K562 (cell line): ENCODE measurements at regions of chr1 and their contacts with region 1.

Region 1: DNA sequence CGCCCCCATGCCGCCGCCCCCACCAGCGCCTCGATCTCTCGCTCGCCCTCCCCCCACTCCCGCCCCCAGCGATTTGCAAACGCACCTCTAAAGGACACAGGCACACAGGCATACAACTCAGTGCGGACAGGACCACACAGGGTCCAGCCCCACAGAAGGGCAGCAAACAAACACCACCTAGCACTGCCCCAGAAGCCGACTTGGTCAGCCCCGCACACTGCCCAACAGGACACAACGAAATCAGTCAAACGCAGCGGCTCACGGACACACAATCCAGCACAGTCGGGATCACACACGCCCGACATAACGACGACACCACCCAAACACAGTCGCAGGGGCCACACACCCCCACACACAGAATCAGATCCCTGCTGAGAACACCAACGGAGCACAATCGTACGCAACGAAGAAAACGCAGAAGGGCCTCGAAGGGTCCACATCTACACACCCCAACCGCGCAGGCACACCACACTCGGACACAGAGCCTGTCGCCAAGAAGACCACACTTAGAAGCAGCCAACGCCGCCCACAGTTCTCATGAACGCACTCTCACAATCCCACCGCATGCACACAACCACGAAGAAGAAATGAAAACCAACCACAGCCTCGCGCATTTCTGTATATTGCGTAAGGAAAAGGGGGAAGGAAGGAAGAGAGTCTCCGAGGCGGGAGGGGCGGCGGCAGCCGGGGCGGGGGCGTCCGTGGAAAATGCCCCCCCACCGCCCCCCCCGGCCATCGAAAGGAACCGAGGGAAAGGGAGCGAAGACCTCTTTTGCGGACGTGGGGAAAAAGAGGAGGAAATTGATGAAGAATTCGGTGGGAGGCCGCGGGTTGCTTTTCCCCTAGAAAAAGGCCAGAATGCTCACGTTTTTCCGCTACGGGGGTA is 481 bp downstream of the TAL1 start:
- DNase-seq: peak; percentile 76 to 89 (median 83)
- ATAC-seq: peak; percentile 48
- H3K4me3 ChIP-seq: peak overlapping the region; percentile 62
- H3K27ac ChIP-seq: peak overlapping the region; percentile 97
- H3K4me1 ChIP-seq: peaks cover 34 to 35% of the 10 kb centered on the region in 2 experiments
- H3K27me3 ChIP-seq: no peaks in the 10 kb centered on the region
- CTCF ChIP-seq: no peak
- EP300 ChIP-seq: peak; percentile 66; the same call in 1 of the 2 replicates
- POLR2A ChIP-seq: peak; percentile 96
- RAD21 ChIP-seq: no peak

Region 2: DNA sequence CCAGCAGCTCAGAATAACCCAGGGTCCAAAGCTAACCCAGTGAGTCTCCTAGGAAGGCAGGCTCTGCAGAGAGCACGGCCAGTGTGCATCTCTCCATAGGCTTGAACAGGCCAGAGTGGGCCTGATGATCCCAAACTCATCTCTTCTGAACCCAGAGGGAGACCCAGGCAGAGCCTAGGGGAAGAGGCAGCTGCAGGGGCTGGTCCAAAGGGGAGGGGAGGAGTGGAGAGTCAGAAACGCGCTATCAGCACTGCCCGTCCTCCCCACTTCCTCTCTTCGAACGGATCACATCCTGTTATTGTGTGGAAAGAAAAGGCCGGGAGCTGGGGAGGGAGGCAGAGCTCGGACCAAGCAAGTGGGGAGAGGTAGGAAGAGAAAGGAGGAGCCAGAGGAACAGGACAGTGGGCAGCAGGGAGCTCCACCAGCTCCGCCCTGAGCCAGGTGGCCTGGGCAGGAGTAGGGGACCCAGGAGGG is 19.7 kb before region 1 on chr1:
- CTCF ChIA-PET with region 1: no interaction called
- POLR2A ChIA-PET with region 1: interaction called, 80 read pairs
- in situ Hi-C with region 1: no loop called
- intact Hi-C with region 1: loop called (anchors 1 kb)
- DNase-seq: peak; percentile 58 to 82 (median 66)
- ATAC-seq: peak; percentile 59
- H3K4me3 ChIP-seq: no peak overlapping the region
- H3K27ac ChIP-seq: peak overlapping the region; percentile 55
- H3K4me1 ChIP-seq: peaks cover 49 to 57% of the 10 kb centered on the region in 2 experiments
- H3K27me3 ChIP-seq: no peaks in the 10 kb centered on the region
- CTCF ChIP-seq: no peak
- EP300 ChIP-seq: peak; percentile 69; the same call in 1 of the 2 replicates
- POLR2A ChIP-seq: peak; percentile 32; the same call in 1 of the 2 replicates
- RAD21 ChIP-seq: no peak

Region 3: DNA sequence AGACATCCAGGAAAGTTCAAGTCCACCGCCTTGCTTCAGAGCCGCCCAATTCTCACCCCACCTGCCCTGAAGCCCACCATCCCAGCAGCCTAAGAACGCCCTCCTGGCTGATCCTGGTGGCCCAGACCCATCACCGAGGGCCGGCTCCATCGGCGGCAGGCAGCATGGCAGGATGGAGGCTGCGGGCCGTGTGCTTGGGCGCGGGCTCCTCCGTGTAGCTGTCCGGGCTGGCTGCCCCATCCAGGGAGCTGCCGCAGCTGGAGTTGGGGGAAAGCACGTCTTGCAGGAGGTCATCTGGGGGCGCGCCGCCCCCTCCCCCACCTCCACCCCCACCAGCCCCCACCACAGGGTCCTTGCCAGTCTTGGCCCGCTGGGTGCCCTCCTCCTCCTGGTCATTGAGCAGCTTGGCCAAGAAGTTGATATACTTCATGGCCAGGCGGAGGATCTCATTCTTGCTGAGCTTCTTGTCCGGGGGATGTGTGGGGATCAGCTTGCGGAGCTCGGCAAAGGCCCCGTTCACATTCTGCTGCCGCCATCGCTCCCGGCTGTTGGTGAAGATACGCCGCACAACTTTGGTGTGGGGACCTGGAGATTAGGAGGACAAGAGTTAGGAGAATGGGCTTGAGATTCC is 11.8 kb before region 1 on chr1:
- CTCF ChIA-PET with region 1: no interaction called
- POLR2A ChIA-PET with region 1: interaction called, 80 read pairs
- in situ Hi-C with region 1: no loop called
- intact Hi-C with region 1: no loop called
- DNase-seq: no peak
- ATAC-seq: no peak
- H3K4me3 ChIP-seq: no peak overlapping the region
- H3K27ac ChIP-seq: no peak overlapping the region
- H3K4me1 ChIP-seq: peaks cover 10 to 16% of the 10 kb centered on the region in 2 experiments; a peak in 4 of 5 replicates
- H3K27me3 ChIP-seq: no peaks in the 10 kb centered on the region
- CTCF ChIP-seq: no peak
- EP300 ChIP-seq: no peak
- POLR2A ChIP-seq: no peak
- RAD21 ChIP-seq: no peak

Region 4: DNA sequence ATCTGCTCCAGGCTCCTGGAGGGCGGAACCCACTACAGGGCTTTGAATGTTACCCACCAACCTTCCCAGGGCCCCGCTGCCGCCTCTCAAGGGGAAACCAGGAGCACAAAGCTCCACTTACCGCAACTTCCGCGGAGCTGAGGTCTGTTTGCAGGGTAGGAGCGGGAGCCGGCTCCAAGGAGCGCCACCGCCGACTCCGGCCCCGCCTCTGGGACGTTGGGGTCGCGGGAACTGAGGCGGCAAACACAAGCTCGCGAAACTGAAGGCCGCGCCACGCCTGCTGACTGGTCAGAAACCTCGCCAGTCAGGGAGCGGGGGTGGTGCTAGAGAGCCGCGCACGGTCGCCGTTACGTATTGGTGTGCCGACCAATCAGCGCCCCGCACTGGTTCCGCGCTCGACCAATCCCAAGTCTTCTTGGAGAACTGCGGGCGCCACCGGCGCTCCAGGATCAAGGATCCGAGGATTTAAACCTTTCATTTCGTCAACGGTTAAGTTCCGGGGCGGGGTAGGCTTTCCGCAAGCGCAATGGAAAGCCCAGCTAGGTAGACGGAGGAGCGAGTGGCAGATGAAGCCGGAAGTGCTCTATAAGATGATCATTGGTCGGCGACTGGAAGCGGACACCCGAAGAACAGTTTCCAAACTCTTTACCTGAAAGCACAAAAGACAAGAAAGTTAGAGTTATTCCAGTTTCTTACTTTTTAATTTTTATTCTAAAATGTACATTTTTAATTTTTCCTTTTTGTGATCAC is 82.5 kb after region 1 on chr1 and contains the start of gene STIL:
- CTCF ChIA-PET with region 1: no interaction called
- POLR2A ChIA-PET with region 1: interaction called, 4 read pairs
- in situ Hi-C with region 1: no loop called
- intact Hi-C with region 1: loop called (anchors 1 kb)
- DNase-seq: peak; percentile 100
- ATAC-seq: peak; percentile 96
- H3K4me3 ChIP-seq: peak within 1 kb of the TSS; percentile 71
- H3K27ac ChIP-seq: peak within 1 kb of the TSS; percentile 94
- H3K4me1 ChIP-seq: peaks cover 5 to 14% of the 10 kb centered on the region in 2 experiments; a peak in 4 of 5 replicates
- H3K27me3 ChIP-seq: no peaks in the 10 kb centered on the region
- CTCF ChIP-seq: peak in 1 of 3 experiments; percentile 15; a peak in 1 of 6 replicates
- EP300 ChIP-seq: peak; percentile 50; the same call in 1 of the 2 replicates
- POLR2A ChIP-seq: peak; percentile 97
- RAD21 ChIP-seq: no peak
- polyA plus RNA-seq, gene STIL: 10.5 to 17.5 TPM

Region 5: GRCh38 chr1:47333922-47334764 is 102.6 kb after region 1 on chr1:
- CTCF ChIA-PET with region 1: no interaction called
- POLR2A ChIA-PET with region 1: interaction called, 4 read pairs
- in situ Hi-C with region 1: no loop called
- intact Hi-C with region 1: loop called (anchors 5 kb)
- DNase-seq: peak; percentile 85 to 93 (median 90)
- ATAC-seq: peak; percentile 88
- H3K4me3 ChIP-seq: peak overlapping the region; percentile 93
- H3K27ac ChIP-seq: peak overlapping the region; percentile 85
- H3K4me1 ChIP-seq: peaks cover 23 to 28% of the 10 kb centered on the region in 2 experiments; a peak in 4 of 5 replicates
- H3K27me3 ChIP-seq: no peaks in the 10 kb centered on the region
- CTCF ChIP-seq: peak; percentile 41 to 53 (median 51)
- EP300 ChIP-seq: no peak; the same call in 1 of the 2 replicates
- POLR2A ChIP-seq: peak; percentile 81
- RAD21 ChIP-seq: no peak